Adrenal gland (tissue), 19 donors: ENCODE measurements at regions of chr17 and their contacts with region 1.

Region 1: DNA sequence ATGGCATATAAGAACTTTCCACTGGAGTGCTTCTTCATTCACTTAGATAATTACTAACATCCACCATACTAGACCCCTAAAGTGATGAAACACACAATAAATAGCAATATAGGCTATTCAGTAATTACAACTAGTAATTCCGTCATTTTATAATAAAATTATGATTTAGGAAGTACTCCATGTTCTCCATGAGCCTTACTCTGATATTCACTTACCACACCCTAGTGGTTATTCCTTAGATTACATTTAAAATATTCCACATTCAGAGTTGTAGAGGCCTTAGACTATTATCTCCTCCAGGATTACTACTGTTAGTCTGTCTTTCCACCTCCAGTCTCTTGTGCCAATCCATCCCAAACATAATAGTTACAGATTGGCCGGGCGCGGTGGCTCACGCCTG is 62.4 kb downstream of the STH start:
- DNase-seq: no peak
- H3K4me3 ChIP-seq: no peak overlapping the region
- H3K27ac ChIP-seq: no peak overlapping the region
- H3K4me1 ChIP-seq: peaks cover 9 to 39% of the 10 kb centered on the region in 2 donors
- H3K27me3 ChIP-seq: no peaks in the 10 kb centered on the region
- CTCF ChIP-seq: peak in 4 of 6 experiments; percentile 21 to 39 (median 34)
- POLR2A ChIP-seq: no peak

Region 2: GRCh38 chr17:46115699-46116098 is 54.3 kb after region 1 on chr17:
- intact Hi-C with region 1: loop called in 1 of 2 experiments (anchors 10 kb)
- DNase-seq: no peak
- H3K4me3 ChIP-seq: no peak overlapping the region
- H3K27ac ChIP-seq: no peak overlapping the region
- H3K4me1 ChIP-seq: peaks cover 14 to 68% of the 10 kb centered on the region in 2 donors
- H3K27me3 ChIP-seq: no peaks in the 10 kb centered on the region
- CTCF ChIP-seq: no peak
- POLR2A ChIP-seq: no peak